Activated T-helper 1 cell treated with anti-CD3 and anti-CD28 coated beads, Interleukin-12 subunit alpha, Interleukin-12 subunit beta, Interleukin-2, Interleukin-4 antibody, amounts not matched to agents 30 ng/mL and 10 ng/mL and 1 ng/mL, durations not matched to agents 14 hours and 24 hours and 36 hours (primary cell): ENCODE measurements at regions of chr12 and their contacts with region 1.

Region 1: DNA sequence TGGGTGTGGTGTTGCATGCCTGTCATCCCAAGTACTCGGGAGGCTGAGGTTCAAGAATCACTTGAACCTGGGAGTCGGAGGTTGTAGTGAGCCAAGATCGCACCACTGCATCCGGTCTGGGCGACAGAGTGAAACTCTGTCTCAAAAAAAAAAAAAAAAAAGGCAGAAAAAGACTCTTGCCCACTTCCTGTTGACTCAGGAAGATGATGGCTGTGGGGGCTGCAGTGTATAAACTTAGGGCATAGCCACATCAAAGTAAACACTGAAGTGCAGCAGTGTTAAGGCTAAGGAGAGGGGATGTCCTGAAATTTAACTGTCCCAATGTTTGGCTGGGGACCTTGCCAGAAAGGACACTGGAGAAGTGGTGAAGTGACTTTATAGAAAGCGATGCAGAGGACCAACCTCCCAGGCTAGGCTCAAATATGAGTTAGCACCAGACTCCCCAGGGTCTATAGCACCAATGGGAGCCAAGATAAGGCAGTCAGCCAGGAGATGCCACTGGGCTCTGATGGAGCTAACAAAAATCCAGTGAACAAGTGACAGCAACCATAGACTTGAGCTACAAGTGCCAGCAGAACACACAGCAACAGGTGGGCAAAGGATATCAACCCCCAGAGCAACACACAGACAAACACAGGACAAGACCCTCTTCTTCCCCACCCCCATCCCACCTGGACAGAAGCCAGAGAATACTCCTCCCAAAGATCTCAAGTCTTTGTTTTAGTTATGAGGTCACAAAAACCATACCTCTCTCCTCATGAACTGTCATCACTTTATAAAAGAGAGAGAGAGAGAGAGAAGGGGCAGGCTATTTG is 28.0 kb downstream of the NELL2 start:
- DNase-seq: peak; percentile 65
- H3K4me3 Mint-ChIP-seq: peak overlapping the region; percentile 63
- H3K27ac Mint-ChIP-seq: peak overlapping the region; percentile 94
- H3K4me1 Mint-ChIP-seq: peaks cover 80% of the 10 kb centered on the region
- H3K27me3 Mint-ChIP-seq: no peaks in the 10 kb centered on the region

Region 2: GRCh38 chr12:44497042-44497441 is 351.1 kb before region 1 on chr12:
- intact Hi-C with region 1: no loop called
- DNase-seq: no peak
- H3K4me3 Mint-ChIP-seq: no peak overlapping the region
- H3K27ac Mint-ChIP-seq: no peak overlapping the region
- H3K4me1 Mint-ChIP-seq: no peaks in the 10 kb centered on the region
- H3K27me3 Mint-ChIP-seq: no peaks in the 10 kb centered on the region

Region 3: GRCh38 chr12:44812062-44812461 is 36.0 kb before region 1 on chr12:
- intact Hi-C with region 1: loop called (anchors 5 kb)
- DNase-seq: peak; percentile 36
- H3K4me3 Mint-ChIP-seq: no peak overlapping the region
- H3K27ac Mint-ChIP-seq: no peak overlapping the region
- H3K4me1 Mint-ChIP-seq: peaks cover 20% of the 10 kb centered on the region
- H3K27me3 Mint-ChIP-seq: no peaks in the 10 kb centered on the region

Region 4: DNA sequence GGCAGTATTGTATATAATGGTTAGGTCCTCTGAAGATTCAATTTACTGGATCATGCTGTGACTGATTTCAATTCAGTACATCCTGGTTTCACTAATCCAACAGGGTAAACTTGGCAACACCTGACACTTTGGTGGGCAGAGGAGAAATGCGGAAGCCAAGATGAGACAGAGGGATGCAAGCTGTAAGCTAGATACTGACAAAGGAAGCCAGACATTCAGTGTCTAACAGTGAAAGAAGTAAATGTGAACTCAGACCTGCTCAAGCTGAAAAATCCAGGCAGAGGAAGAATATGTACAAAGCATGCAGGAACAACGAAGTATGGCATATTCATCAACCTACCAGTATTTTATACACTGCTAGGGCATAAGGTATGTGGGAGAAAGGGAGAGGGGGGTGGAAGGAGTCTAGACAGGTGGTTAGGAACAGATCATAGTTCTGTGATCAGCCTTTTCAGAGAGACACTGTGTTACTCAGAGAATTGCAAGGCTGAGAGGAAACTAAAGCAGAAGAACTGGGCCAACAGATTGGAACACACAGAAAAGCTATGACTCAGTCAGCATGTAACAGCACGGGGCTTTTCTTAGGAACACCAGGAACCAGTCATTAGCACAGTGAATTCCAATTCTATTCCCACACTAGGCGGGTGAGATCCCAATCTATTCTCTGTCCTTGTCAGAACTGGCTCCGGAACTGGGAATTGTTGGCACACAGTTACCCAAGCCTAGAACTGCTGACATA is 12.3 kb before region 1 on chr12:
- intact Hi-C with region 1: loop called (anchors 1 kb)
- DNase-seq: no peak
- H3K4me3 Mint-ChIP-seq: peak overlapping the region; percentile 19
- H3K27ac Mint-ChIP-seq: peak overlapping the region; percentile 85
- H3K4me1 Mint-ChIP-seq: peaks cover 69% of the 10 kb centered on the region
- H3K27me3 Mint-ChIP-seq: no peaks in the 10 kb centered on the region

Region 5: GRCh38 chr12:44875954-44876553 is 28.0 kb after region 1 on chr12 and contains the start of gene NELL2:
- intact Hi-C with region 1: loop called (anchors 1 kb)
- DNase-seq: peak; percentile 43
- H3K4me3 Mint-ChIP-seq: peak within 1 kb of the TSS; percentile 96
- H3K27ac Mint-ChIP-seq: peak within 1 kb of the TSS; percentile 78
- H3K4me1 Mint-ChIP-seq: peaks cover 33% of the 10 kb centered on the region
- H3K27me3 Mint-ChIP-seq: peaks cover 23% of the 10 kb centered on the region
- total RNA-seq, gene NELL2: 11.5 and 16.4 TPM in 2 replicates

Region 6: DNA sequence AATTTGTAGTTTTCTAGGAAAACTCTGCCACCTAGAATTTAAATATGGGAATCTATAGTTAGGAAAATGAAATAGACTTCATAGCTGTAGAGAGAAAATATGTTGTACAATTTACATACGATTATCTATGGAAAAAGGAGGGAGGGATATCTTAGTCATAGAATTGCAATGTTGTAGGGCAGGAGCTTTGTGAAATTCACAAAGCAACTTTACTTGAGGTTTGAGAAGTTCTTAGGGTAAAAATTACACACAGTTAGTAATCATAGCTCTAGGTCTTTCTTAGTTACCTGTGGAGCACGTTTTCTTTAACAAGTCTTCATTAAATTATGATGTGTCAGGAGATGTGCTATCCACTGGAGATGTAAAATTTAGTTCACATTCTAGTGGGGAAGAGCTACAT is 264.2 kb after region 1 on chr12:
- intact Hi-C with region 1: no loop called
- DNase-seq: no peak
- H3K4me3 Mint-ChIP-seq: no peak overlapping the region
- H3K27ac Mint-ChIP-seq: no peak overlapping the region
- H3K4me1 Mint-ChIP-seq: no peaks in the 10 kb centered on the region
- H3K27me3 Mint-ChIP-seq: peaks cover 4% of the 10 kb centered on the region

Region 7: DNA sequence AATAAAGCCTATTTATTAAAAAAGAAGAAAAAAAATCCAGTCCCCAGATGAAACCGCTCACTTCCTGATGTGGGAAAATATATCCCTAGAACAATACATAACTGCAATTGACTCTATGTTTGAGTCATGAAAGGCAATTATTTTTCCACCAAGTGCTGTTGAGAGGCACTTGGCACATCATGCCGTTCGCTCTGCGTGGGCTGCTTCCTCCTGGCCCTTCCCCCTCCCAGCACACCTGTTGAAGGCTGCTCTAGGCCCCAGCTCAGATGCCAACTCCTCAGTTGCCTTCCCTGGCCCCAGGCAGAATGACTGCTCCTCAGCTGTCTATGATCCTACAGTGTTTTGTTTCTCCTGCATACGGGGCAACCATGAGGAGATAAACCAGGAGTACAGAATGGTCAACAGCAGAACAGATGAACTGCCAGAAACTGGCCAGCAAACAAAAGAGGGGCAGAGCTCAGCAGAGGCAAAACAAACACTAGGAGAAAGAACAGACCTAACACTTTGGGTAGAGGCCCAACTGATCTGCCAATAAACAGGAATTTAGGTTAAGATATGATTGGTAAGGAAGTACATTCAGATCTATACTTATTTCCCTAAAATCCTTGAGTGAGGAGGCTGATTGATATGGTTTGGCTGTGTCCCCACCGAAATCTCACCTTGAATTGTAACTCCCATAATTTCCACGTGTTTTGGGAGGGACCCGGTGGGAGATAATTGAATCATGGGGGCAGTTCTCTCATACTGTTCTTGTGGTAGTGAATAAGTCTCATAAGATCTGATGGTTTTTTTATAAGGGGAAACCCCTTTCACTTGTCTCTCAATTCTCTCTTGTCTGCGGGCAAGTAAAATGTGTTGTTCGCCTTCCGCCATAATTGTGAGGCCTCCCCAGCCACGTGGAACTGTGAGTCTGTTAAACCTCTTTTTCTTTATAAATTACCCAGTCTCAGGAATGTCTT is 1362.1 kb after region 1 on chr12:
- intact Hi-C with region 1: loop called (anchors 10 kb)
- DNase-seq: peak; percentile 31
- H3K4me3 Mint-ChIP-seq: peak overlapping the region; percentile 52
- H3K27ac Mint-ChIP-seq: peak overlapping the region; percentile 96
- H3K4me1 Mint-ChIP-seq: peaks cover 64% of the 10 kb centered on the region
- H3K27me3 Mint-ChIP-seq: no peaks in the 10 kb centered on the region